Left colon (tissue), 2 donors: ENCODE measurements at regions of chr1 and their contacts with region 1.

Region 1: DNA sequence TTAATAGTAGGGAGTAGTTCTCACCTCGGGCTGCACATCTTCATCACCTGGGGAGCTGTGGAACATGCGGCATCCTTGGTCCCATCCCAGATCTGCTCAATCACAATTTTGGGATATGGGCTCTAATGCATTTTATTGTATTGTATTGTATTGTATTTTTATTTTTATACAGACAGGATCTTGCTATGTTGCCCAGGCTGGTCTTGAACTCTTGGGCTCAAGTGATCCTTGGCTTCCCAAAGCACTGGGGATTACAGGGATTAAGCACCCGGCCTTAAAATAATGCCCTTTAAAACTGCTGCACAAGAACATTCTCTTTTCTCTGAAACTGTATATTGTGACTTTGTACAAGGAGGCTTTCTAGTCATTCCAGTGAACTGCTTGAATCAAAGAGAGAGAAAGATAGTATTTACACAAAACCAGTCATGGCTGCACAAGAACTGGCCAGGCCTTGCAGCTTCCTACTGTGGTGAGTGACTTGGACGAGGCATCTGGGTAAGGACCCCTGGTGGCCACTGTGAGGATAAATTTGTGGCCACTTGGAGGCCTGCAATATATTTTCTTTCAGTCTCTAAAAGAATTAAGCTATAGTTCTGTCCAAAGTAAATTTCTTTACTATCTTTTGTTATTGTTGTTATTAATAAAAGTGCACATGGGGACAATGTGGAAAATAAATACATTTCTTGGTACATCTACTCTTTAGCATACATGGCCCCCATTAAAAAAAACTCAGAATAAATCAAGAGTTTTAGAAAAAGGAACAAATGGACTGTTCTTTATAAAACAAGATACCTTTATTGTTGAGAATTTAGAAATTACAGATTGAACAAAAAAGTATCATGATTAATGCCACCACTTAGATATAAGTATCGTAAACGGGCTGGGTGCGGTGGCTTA is 48.0 kb downstream of the TBCE start:
- DNase-seq: peak; percentile 66 to 67
- ATAC-seq: peak; percentile 81

Region 2: DNA sequence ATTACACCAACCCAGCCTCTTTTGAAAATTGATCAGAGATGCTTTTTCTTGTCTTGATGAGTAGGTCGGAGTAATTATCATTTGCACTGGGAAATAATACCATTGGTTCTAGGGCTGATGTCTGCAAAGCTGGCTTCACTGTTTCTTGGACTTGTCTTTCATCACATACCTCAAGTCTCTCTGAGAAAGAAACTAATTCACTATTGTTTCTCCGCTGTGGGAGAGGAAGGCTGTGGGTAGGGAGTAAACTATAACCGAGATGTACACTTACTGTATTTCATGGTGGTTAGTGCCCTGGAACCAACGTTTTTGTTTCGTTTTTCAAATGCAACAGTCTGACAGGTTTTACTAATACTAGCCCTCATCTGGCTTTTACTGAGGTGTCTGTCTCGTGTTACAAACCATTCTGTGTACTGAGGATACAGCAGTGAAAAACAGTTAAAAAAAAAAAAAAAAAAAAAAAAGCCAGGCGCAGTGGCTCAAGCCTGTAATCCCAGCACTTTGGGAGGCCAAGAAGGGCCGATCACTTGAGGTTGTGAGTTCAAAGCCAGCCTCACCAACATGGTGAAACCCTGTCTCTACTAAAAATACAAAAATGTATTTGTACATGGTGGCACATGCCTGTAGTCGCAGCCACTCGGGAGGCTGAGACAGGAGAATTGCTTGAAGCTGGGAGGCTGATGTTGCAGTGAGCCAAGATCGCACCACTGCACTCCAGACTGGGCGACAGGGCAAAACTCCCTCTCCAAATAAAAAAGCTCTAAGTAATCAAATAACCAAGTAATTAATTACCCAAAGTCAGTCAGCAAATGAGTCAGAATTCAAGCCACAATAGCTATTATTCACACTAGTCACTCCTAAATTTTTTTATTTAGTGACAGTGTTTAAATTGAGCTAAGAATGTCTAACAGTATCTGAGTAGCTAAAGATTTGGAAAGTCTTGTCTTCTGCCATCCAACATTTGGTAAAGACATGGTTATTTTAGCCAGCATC is 309.9 kb before region 1 on chr1:
- intact Hi-C with region 1: loop called in 1 of 2 experiments (anchors 10 kb)
- DNase-seq: no peak
- ATAC-seq: no peak

Region 3: DNA sequence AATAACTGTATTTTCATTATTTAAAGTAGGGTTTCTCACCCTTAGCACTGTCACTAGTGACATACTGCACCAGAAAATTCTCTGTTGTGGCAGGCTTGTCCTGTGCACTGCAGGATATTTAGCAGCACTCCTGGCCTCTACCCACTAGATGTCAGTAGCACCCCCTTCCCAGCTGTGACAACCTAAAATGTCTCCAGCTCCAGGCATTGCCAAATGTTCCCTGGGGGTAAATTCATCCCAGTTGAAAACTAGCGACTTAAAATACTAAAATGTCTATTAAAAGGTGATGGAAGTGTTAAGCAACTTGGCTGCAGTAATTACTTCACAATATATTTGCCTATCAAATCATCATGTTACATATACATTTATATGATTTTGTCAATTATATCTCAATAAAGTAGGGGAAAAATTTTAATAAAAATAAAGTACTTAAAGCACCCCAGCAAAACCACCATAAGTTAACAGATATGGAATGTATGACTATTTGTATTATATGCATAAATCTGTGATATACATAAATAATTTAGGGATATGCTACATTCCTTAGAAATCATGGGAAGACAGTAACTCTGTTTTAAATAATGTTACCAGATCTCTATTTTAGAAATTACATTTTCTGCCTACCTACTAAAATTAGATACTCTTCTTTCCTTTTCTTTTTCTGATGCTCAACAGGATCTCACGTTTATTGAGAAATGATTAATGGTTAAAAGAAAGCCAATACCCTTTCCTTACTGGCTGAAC is 161.9 kb before region 1 on chr1:
- intact Hi-C with region 1: loop called in 1 of 2 experiments (anchors 2 kb)
- DNase-seq: peak; percentile 39 to 46
- ATAC-seq: peak; percentile 94

Region 4: DNA sequence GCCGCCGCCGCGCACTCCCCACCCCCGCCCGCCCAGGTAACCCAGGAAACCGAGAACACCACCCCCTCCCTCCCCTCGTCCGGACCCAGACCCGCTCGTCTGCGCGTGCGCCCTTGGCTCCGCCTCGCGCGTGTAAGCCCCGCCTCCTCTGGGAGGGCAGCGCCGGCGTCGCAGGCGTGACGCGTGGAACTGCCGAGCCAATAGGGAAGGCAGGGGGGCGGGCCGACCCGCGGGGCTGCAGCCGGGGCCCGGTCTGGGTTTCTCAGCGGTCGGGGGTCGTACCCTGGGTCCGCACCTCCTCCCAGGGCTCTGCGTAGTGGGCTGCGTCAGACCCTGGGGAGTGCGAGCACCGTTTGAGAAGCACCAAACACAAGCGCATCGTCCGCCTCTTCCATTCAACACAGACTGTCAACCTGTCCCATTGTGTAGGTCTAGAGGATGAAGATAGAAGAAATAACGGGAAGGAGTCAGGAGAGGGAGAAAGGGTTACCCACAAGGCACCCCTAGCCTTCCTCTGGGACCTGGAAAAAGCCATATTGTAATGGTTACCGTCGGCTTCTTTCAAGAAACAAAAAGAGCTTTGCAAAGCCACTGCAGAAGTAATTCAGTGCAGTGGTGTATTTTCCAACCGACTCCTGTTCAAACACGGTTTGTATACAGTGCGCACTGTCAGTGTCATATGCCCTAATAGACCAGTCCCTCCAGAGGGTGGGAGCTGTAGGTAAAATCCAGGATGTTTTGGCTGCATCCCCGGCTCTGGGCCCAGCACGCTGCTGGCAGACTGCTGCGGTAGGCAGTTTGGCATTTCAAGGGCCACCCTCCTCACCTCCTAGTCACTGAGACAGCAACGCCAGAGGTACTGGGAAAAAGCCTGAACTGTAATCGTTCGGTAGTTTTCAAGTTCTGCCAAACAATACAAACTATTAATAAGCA is 451.9 kb after region 1 on chr1:
- intact Hi-C with region 1: no loop called
- DNase-seq: peak; percentile 93 to 96
- ATAC-seq: peak; percentile 94